Posterior vena cava (tissue), 2 donors: ENCODE measurements at regions of chr3 and their contacts with region 1.

Region 1: GRCh38 chr3:11969986-11970385 is 34.2 kb upstream of the SYN2 start:
- DNase-seq: no peak

Region 2: GRCh38 chr3:11928381-11928780 is 41.6 kb before region 1 on chr3:
- intact Hi-C with region 1: loop called in 1 of 2 experiments (anchors 1 kb)
- DNase-seq: no peak

Region 3: GRCh38 chr3:12719984-12720898 is 750.3 kb after region 1 on chr3:
- intact Hi-C with region 1: no loop called
- DNase-seq: peak; percentile 89